ENCODE measurements at regions of chr12 and their contacts with region 1.

Region 1: GRCh38 chr12:14239350-14239934 is 126.0 kb upstream of the ATF7IP start:
- DNase-seq: peak in 1 of 2 donors; percentile 14
- ATAC-seq: peak; percentile 69 to 98 (median 86)
- H3K4me3 ChIP-seq: peak overlapping the region in 4 of 10 donors; percentile 5 to 40 (median 6)
- H3K27ac ChIP-seq: peak overlapping the region in 5 of 10 donors; percentile 5 to 74 (median 40)
- H3K4me1 ChIP-seq: peaks cover 0 to 21% (median 6%) of the 10 kb centered on the region in 9 donors
- H3K27me3 ChIP-seq: no peaks in the 10 kb centered on the region
- CTCF ChIP-seq: peak in 2 of 9 donors; percentile 23 to 24

Region 2: GRCh38 chr12:14157088-14157747 is 82.2 kb before region 1 on chr12:
- intact Hi-C with region 1: no loop called
- DNase-seq: no peak
- ATAC-seq: no peak
- H3K4me3 ChIP-seq: no peak overlapping the region
- H3K27ac ChIP-seq: no peak overlapping the region
- H3K4me1 ChIP-seq: no peaks in the 10 kb centered on the region
- H3K27me3 ChIP-seq: peaks cover 0 to 5% (median 0%) of the 10 kb centered on the region in 7 donors
- CTCF ChIP-seq: no peak

Region 3: GRCh38 chr12:14257734-14258574 is 18.5 kb after region 1 on chr12:
- intact Hi-C with region 1: no loop called
- DNase-seq: peak in 1 of 2 donors; percentile 98
- ATAC-seq: peak in 7 of 8 donors; percentile 83 to 92 (median 89)
- H3K4me3 ChIP-seq: peak overlapping the region in 7 of 10 donors; percentile 6 to 30 (median 22)
- H3K27ac ChIP-seq: peak overlapping the region; percentile 83 to 96 (median 92)
- H3K4me1 ChIP-seq: peaks cover 13 to 76% (median 52%) of the 10 kb centered on the region in 9 donors
- H3K27me3 ChIP-seq: no peaks in the 10 kb centered on the region
- CTCF ChIP-seq: no peak

Region 4: DNA sequence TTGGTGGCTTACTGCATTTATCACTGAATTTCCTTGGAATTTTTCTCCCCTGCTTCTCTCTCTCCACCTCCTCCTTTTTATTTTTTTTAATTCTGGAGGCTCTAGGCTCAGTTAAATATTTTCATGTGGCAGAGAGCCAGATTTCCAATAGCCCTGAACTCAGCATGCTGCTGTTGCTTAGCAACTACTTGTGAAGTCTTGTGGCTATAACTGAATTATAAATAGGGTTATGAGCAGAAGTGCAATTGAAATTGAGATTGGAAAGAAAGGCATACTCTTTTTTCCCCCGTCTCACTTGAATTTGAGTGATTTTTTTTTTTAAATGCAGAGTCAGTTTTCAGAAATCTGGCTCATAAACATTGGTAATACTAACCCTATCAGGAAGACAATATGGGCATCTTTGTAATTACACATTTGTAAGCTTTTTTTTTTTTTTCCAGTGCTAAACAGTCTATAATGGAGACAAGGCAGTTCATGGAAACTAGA is 164.3 kb after region 1 on chr12:
- intact Hi-C with region 1: no loop called
- DNase-seq: peak in 1 of 2 donors; percentile 71
- ATAC-seq: peak; percentile 86 to 94 (median 92)
- H3K4me3 ChIP-seq: no peak overlapping the region
- H3K27ac ChIP-seq: peak overlapping the region in 8 of 10 donors; percentile 4 to 66 (median 36)
- H3K4me1 ChIP-seq: peaks cover 6 to 80% (median 30%) of the 10 kb centered on the region in 9 donors
- H3K27me3 ChIP-seq: no peaks in the 10 kb centered on the region
- CTCF ChIP-seq: no peak

Region 5: GRCh38 chr12:14417715-14418114 is 178.3 kb after region 1 on chr12:
- intact Hi-C with region 1: loop called in 2 of 10 experiments (anchors 5 kb)
- DNase-seq: peak; percentile 29 to 79
- ATAC-seq: peak in 7 of 8 donors; percentile 78 to 91 (median 87)
- H3K4me3 ChIP-seq: peak overlapping the region in 6 of 10 donors; percentile 6 to 31 (median 16)
- H3K27ac ChIP-seq: peak overlapping the region in 7 of 10 donors; percentile 4 to 68 (median 48)
- H3K4me1 ChIP-seq: peaks cover 0 to 90% (median 66%) of the 10 kb centered on the region in 9 donors
- H3K27me3 ChIP-seq: no peaks in the 10 kb centered on the region
- CTCF ChIP-seq: no peak

Region 6: GRCh38 chr12:14505626-14506596 is 266.5 kb after region 1 on chr12:
- intact Hi-C with region 1: loop called in 1 of 10 experiments (anchors 5 kb)
- DNase-seq: no peak
- ATAC-seq: no peak
- H3K4me3 ChIP-seq: no peak overlapping the region
- H3K27ac ChIP-seq: no peak overlapping the region
- H3K4me1 ChIP-seq: no peaks in the 10 kb centered on the region
- H3K27me3 ChIP-seq: no peaks in the 10 kb centered on the region
- CTCF ChIP-seq: no peak

Region 7: DNA sequence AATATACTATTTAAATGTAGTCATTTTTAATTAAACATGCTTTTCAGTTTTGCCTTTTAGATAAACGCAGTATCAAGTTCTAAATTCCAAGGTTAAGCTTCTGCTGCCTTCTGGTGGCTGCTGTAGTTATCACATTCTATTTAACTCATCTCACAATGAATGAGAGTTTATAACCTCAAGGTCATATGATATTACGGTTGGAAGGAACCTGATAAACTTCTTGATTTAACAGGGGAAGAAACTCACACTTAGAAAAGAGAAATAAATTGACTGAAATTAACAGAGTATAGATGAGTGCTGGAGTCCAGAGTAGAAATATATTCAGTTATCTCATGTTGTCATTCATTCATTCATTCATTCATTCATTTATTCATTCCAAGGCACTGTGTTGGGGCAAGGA is 425.1 kb after region 1 on chr12:
- intact Hi-C with region 1: loop called in 4 of 10 experiments (anchors 2 to 10 kb)
- DNase-seq: peak in 1 of 2 donors; percentile 39
- ATAC-seq: peak in 3 of 8 donors; percentile 16 to 55 (median 41)
- H3K4me3 ChIP-seq: no peak overlapping the region
- H3K27ac ChIP-seq: no peak overlapping the region
- H3K4me1 ChIP-seq: peaks cover 0 to 4% (median 0%) of the 10 kb centered on the region in 9 donors
- H3K27me3 ChIP-seq: no peaks in the 10 kb centered on the region
- CTCF ChIP-seq: peak; percentile 38 to 79 (median 68)

Region 8: DNA sequence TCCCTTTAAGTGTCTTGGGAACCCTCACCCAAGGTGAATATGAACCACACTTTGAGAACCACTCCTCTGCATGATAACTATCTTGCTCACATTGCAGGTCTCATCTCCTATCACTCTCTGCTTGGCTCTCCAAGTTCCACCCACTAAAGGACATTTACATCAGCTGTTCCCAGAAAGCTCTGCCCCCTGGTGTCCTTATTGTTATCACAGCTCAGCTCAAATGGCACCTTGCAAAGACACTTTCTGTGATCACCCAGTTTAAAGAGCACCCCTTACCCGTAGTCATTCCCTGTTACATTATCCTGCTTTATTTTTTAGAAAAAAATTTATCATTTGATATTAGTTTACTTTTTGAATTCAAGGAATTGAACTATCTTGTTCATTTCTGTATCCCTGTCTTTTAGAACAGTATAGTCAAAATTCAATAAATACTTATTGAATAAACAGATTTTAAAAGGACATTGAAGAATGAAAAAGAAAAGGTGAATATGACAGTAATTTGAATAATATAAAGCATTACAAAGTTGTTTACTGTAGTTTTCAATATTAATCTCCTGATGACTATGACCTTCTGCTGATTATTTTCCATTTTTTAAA is 477.5 kb after region 1 on chr12:
- intact Hi-C with region 1: loop called in 2 of 10 experiments (anchors 2 to 5 kb)
- DNase-seq: peak in 1 of 2 donors; percentile 18
- ATAC-seq: peak in 2 of 8 donors; percentile 41 to 62
- H3K4me3 ChIP-seq: no peak overlapping the region
- H3K27ac ChIP-seq: no peak overlapping the region
- H3K4me1 ChIP-seq: no peaks in the 10 kb centered on the region
- H3K27me3 ChIP-seq: no peaks in the 10 kb centered on the region
- CTCF ChIP-seq: peak; percentile 17 to 67 (median 56)

Measured in heart right ventricle (tissue), 16 donors.